ENCODE measurements at regions of chr12 and their contacts with region 1.

Region 1: DNA sequence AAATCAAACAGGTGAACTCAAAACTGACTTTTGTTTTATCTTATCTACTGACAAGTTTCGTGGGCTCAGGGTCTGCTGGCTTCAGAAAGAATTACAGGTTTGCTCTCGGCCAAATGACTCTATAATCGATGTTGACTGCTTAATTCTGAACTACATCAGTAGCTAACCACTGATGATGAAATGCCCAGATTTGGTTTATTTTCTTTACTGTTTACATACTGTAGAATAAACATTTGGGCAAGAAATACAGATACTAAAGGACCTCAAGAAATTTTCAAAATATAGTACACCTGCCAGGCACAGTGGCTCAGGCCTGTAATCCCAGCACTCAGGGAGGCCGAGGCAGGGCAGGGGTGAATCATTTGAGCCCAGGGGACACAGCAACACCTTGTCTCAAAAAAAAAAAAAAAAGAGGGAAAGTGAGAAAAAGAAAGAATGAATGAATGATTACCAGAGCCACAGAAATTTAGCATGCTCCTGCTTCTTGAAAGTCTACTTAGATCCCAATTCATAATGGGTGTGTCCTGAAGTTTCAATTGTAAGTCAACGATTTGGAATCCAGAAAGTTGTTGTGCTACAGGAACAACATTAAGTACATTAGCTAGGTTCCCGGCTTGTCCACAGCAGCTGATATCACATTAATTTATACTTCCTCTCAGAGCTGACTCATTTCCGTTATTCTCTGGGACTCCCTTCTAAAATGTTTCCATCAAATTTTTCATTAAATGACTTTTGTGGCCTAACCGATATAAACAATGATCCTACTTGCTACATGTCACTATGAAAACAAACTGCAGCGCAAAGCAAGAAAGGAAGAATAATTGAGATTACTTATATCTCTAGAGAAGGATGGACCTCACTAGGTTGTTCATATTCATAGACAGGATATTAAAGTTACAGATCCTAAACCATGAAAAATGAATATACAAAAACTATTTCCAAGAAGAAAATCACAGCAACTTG is 134.3 kb downstream of the MED13L start:
- DNase-seq: no peak
- ATAC-seq: peak; percentile 9

Region 2: DNA sequence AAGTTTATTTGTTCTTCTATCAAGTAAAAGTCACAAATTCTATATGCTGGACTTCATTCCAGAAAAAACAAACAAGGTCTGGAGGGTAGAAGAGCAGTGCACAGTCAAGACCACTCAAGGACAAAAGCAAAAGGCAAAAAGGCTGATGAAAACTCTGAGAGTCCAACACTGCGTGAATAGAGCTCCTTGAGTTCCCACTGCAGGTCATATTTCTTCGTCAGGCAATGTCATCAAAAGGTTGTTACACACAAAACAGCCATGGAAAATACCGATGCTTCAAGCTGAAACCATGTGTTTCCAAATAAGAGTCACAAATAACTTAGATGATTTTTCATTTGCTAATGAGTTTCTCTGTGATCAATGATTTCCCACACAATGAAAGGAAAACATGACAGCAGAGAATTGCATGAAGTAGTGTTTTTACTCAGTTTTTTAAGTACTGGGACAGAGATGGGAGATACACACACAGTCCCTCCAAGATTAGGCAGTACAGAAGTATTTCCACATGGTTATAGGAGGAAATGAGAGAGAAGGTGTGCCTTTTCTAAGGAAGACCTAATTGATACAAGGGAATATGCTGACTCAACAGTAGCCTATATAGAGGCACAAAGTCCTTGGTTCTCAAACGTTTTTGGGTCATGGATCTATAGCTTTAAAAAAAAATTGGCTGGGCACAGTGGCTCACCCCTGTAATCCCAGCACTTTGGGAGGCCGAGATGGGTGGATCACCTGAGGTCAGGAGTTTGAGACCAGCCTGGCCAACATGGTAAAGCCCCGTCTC is 43.4 kb before region 1 on chr12:
- intact Hi-C with region 1: no loop called
- DNase-seq: no peak
- ATAC-seq: peak; percentile 19

Region 3: DNA sequence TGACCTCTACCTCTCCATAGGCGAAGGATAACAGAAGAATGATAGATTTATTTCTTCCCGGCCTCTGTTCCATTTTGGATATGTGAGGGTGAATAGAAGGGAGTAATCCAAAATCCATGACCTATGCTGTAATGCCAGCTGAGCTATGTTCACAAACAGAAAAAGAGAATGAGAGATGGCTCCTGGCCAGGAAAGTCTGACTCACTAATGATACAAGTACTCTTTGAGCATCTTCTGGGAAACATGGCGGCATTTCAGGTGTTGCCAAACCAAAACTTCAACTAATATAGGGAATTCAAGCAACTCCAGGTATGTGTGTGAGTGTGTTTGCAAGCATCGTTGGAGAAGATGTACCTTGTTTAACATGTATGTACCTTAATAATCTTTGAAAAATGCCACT is 79.1 kb after region 1 on chr12:
- intact Hi-C with region 1: loop called (anchors 10 kb)
- DNase-seq: no peak
- ATAC-seq: peak; percentile 85

Region 4: GRCh38 chr12:116303929-116304328 is 160.7 kb after region 1 on chr12:
- intact Hi-C with region 1: no loop called
- DNase-seq: no peak
- ATAC-seq: peak; percentile 77

Measured in left ventricle myocardium superior (tissue), 1 donor.